ENCODE measurements at regions of chr11 and their contacts with region 1.

Region 1: DNA sequence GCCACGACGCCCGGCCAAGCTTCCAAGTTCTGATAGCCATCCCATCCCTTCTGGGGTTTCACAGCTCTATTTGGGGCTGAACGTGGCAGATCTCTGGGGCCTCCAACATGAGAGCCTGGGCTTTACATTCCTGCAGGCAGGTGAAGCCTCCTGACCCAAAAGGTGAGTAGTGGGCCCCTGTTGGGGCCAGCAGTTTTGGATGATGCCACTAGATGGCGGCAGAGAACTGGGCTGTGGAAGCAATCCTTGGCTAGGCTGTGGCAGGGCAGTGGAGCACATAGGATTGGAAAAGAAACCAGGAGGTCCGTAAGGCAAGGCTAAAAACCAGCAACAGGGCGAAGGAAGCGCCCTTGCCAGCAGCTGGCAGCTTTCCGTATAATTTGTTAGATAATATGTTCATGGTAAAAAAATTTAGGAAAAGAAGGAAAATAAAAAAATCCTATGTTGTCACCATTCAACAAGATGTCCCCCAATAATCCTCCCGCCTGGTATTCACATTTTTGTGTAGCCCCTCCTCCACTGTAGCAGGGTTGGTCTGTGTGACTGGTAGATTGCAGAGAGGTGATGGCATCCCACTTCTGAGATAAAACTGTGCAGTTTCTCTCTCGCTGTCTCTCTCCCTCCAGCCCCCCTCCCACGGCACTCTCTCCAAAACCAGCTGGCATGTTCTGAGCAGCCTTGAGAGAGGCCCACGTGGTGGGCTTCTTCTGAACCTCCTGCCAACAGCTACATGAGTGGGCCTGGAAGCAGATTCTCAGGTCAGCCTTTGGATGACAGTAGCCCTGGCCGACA is 43.6 kb upstream of the OR4B1 start:
- DNase-seq: peak; percentile 39 to 74 (median 58)
- ATAC-seq: peak; percentile 73
- H3K4me3 ChIP-seq: no peak overlapping the region
- H3K4me3 Mint-ChIP-seq: no peak overlapping the region
- H3K27ac ChIP-seq: no peak overlapping the region
- H3K27ac Mint-ChIP-seq: peak overlapping the region; percentile 18
- H3K4me1 ChIP-seq: peaks cover 7% of the 10 kb centered on the region
- H3K4me1 Mint-ChIP-seq: peaks cover 19% of the 10 kb centered on the region
- H3K27me3 ChIP-seq: no peaks in the 10 kb centered on the region
- H3K27me3 Mint-ChIP-seq: no peaks in the 10 kb centered on the region
- CTCF ChIP-seq: peak; percentile 81

Region 2: DNA sequence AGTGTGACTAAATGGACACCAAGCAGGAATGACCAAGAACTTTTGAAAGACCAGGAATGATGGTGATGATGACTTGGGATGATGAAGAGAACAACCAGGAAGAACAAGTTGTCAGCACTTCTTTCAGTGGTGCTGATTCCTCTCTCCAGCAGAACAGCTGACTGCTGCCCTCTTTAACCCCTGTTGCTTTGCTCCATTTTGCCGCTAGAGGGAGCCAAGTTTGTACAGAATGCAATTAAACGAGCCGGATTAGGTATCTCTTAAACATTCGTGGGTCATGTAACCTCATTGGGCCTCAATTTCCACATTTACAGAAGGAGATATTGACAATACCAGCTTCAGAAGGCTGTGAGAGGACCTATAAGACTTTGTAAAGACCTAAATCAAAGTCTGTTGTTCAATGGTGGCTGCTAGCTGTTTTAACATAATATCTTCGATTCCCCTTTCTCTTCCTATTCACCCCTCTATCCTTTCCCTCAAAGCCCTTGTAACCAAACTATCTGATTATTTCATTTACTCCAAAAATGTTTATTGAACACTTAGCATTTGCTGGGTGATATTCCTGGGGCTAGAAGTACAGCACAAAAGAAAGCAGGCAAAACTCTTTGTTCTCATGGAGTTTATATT is 134.9 kb after region 1 on chr11:
- CTCF ChIA-PET with region 1: interaction called, 5 read pairs
- POLR2A ChIA-PET with region 1: no interaction called
- intact Hi-C with region 1: loop called in 1 of 2 experiments (anchors 2 kb)
- DNase-seq: peak; percentile 27 to 72 (median 60)
- ATAC-seq: no peak
- H3K4me3 ChIP-seq: no peak overlapping the region
- H3K4me3 Mint-ChIP-seq: no peak overlapping the region
- H3K27ac ChIP-seq: no peak overlapping the region
- H3K27ac Mint-ChIP-seq: no peak overlapping the region
- H3K4me1 ChIP-seq: no peaks in the 10 kb centered on the region
- H3K4me1 Mint-ChIP-seq: peaks cover 6% of the 10 kb centered on the region
- H3K27me3 ChIP-seq: peaks cover 0 to 7% of the 10 kb centered on the region in 2 experiments
- H3K27me3 Mint-ChIP-seq: peaks cover 39% of the 10 kb centered on the region
- CTCF ChIP-seq: peak; percentile 82

Region 3: DNA sequence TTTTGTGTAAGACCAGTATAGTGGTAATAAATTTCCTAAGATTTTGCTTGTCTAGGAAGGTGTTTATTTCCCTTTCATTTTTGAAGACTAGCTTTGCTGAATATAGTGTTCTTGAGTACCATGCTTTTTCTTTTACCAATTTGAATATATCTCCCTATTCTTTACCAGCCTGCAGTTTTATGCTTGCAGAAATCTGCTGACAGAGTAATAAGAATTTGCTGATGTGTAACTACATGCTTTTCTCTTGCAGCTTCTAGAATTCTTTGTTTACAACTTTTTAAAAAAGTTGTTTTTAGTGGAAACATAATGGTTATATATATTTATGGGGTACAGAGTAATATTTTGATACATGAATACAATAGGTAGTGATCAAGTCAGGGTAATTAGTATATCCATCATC is 1360.2 kb after region 1 on chr11:
- CTCF ChIA-PET with region 1: no interaction called
- POLR2A ChIA-PET with region 1: no interaction called
- intact Hi-C with region 1: loop called in 1 of 2 experiments (anchors 5 kb)
- DNase-seq: no peak
- ATAC-seq: no peak
- H3K4me3 ChIP-seq: no peak overlapping the region
- H3K4me3 Mint-ChIP-seq: no peak overlapping the region
- H3K27ac ChIP-seq: no peak overlapping the region
- H3K27ac Mint-ChIP-seq: no peak overlapping the region
- H3K4me1 ChIP-seq: no peaks in the 10 kb centered on the region
- H3K4me1 Mint-ChIP-seq: no peaks in the 10 kb centered on the region
- H3K27me3 ChIP-seq: no peaks in the 10 kb centered on the region
- H3K27me3 Mint-ChIP-seq: no peaks in the 10 kb centered on the region
- CTCF ChIP-seq: no peak